ENCODE measurements at regions of chr4 and their contacts with region 1.

Region 1: GRCh38 chr4:54384563-54384962 is 155.5 kb downstream of the PDGFRA start:
- DNase-seq: peak; percentile 39 to 53 (median 46)
- H3K4me3 ChIP-seq: no peak overlapping the region
- H3K27ac ChIP-seq: no peak overlapping the region
- H3K4me1 ChIP-seq: no peaks in the 10 kb centered on the region
- H3K27me3 ChIP-seq: no peaks in the 10 kb centered on the region
- CTCF ChIP-seq: peak in 2 of 3 donors; percentile 22 to 23
- EP300 ChIP-seq: no peak
- POLR2A ChIP-seq: no peak

Region 2: GRCh38 chr4:54149323-54149722 is 235.2 kb before region 1 on chr4:
- intact Hi-C with region 1: no loop called
- DNase-seq: no peak
- H3K4me3 ChIP-seq: no peak overlapping the region
- H3K27ac ChIP-seq: no peak overlapping the region
- H3K4me1 ChIP-seq: peaks cover 1% of the 10 kb centered on the region
- H3K27me3 ChIP-seq: no peaks in the 10 kb centered on the region
- CTCF ChIP-seq: no peak
- EP300 ChIP-seq: no peak
- POLR2A ChIP-seq: no peak

Region 3: GRCh38 chr4:54440394-54441136 is 56.0 kb after region 1 on chr4:
- intact Hi-C with region 1: loop called in 1 of 4 experiments (anchors 10 kb)
- DNase-seq: peak in 1 of 5 donors; percentile 19
- H3K4me3 ChIP-seq: no peak overlapping the region
- H3K27ac ChIP-seq: no peak overlapping the region
- H3K4me1 ChIP-seq: no peaks in the 10 kb centered on the region
- H3K27me3 ChIP-seq: no peaks in the 10 kb centered on the region
- CTCF ChIP-seq: peak in 2 of 3 donors; percentile 42 to 54
- EP300 ChIP-seq: no peak
- POLR2A ChIP-seq: no peak

Measured in ovary (tissue), 10 donors.